Gastrocnemius medialis (tissue), 4 donors: ENCODE measurements at regions of chr10 and their contacts with region 1.

Region 1: GRCh38 chr10:97463363-97464132 is 17.6 kb downstream of the ZDHHC16 start:
- DNase-seq: peak; percentile 16 to 51
- ATAC-seq: peak; percentile 79 to 81
- H3K4me3 ChIP-seq: no peak overlapping the region
- H3K27ac ChIP-seq: peak overlapping the region; percentile 54 to 64 (median 59)
- H3K4me1 ChIP-seq: peaks cover 5 to 8% of the 10 kb centered on the region in 2 donors
- H3K27me3 ChIP-seq: no peaks in the 10 kb centered on the region
- CTCF ChIP-seq: peak; percentile 83 to 90 (median 86)
- POLR2A ChIP-seq: no peak

Region 2: DNA sequence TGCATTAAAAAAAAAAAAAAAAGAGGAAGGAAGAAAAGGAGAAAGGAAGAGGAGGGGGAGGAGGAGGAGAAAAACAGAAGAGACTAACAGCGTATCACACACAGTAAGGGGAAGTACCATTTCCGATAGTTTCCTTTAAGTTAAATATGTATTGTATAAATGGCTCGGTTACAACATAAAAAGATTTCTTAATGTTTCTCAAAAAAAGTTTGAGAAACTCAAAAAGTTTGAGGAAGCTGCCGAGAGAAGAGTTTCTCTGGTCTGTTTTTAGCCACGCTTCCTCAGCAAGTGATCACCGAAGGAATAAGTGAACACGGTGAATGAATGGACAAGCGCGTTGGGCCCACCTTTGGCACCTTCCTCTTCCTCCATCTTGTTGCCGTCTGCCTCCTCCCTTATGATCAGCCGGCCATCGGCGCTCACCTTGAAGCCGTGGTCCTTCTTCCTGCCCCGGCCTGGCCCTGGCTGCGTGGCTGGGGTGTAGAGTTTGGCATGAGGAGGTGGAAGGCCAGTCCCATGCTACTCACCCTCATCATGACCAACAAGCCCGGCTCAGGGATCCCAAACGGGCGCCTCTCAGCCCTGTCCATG is 97.7 kb before region 1 on chr10:
- in situ Hi-C with region 1: no loop called
- intact Hi-C with region 1: no loop called
- DNase-seq: no peak
- ATAC-seq: no peak
- H3K4me3 ChIP-seq: no peak overlapping the region
- H3K27ac ChIP-seq: peak overlapping the region in 1 of 4 donors; percentile 34
- H3K4me1 ChIP-seq: peaks cover 0 to 8% of the 10 kb centered on the region in 2 donors
- H3K27me3 ChIP-seq: no peaks in the 10 kb centered on the region
- CTCF ChIP-seq: no peak
- POLR2A ChIP-seq: no peak

Region 3: DNA sequence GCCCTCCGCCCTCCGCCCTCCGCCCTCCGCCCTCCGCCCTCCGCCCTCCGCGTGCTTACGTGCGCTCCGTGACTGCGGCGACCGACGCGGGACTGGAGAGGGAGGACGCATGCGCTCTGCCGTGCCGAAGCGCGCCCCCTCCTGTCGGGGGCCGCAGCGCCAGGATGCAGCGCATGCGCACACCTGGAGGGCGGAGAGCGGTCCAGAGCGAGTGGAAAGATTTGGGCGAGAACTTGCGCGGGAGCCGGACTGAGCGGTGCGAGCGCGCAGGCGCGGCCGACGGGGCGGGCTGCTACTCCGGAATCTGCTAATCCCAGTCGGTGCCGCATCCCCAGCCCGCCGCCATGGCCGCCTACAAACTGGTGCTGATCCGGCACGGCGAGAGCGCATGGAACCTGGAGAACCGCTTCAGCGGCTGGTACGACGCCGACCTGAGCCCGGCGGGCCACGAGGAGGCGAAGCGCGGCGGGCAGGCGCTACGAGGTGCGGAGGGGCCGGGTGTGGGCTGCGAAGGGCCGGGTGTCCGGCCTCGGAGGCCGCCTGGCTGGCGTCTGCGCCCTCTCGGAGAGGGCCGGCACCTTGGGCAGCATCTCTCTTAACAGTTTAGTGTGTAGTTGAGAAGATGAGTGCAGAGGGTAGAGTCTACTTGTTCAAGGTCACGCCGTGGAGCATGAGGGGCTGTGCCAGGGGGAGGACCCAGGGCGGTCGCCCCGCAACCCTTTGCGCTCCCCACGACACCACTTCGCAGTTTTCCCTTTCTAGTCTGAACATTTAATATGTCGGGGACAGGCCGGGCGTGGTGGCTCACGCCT is 37.4 kb before region 1 on chr10 and contains the start of gene PGAM1:
- in situ Hi-C with region 1: no loop called
- intact Hi-C with region 1: no loop called
- DNase-seq: peak; percentile 92 to 94
- ATAC-seq: peak; percentile 94 to 95
- H3K4me3 ChIP-seq: peak within 1 kb of the TSS; percentile 73 to 98 (median 83)
- H3K27ac ChIP-seq: peak within 1 kb of the TSS; percentile 80 to 91 (median 86)
- H3K4me1 ChIP-seq: peaks cover 18 to 20% of the 10 kb centered on the region in 2 donors
- H3K27me3 ChIP-seq: no peaks in the 10 kb centered on the region
- CTCF ChIP-seq: peak in 4 of 5 experiments; percentile 37 to 70 (median 58)
- POLR2A ChIP-seq: peak; percentile 70 to 75
- total RNA-seq, gene PGAM1: 41.0 to 72.1 (median 62.2) TPM

Region 4: GRCh38 chr10:97612386-97612785 is 148.8 kb after region 1 on chr10:
- in situ Hi-C with region 1: loop called in 2 of 4 experiments (anchors 10 kb)
- intact Hi-C with region 1: loop called (anchors 1 kb)
- DNase-seq: peak in 1 of 2 donors; percentile 55
- ATAC-seq: peak; percentile 91 to 95
- H3K4me3 ChIP-seq: no peak overlapping the region
- H3K27ac ChIP-seq: peak overlapping the region in 3 of 4 donors; percentile 33 to 51 (median 41)
- H3K4me1 ChIP-seq: peaks cover 21 to 24% of the 10 kb centered on the region in 2 donors
- H3K27me3 ChIP-seq: no peaks in the 10 kb centered on the region
- CTCF ChIP-seq: peak; percentile 59 to 73 (median 66)
- POLR2A ChIP-seq: no peak